B cell (primary cell): ENCODE measurements at regions of chr15 and their contacts with region 1.

Region 1: GRCh38 chr15:78195735-78196201 is 38.6 kb downstream of the ACSBG1 start:
- DNase-seq: peak; percentile 79
- ATAC-seq: peak; percentile 98
- H3K4me3 ChIP-seq: no peak overlapping the region
- H3K4me3 Mint-ChIP-seq: no peak overlapping the region
- H3K27ac ChIP-seq: no peak overlapping the region
- H3K27ac Mint-ChIP-seq: no peak overlapping the region
- H3K4me1 ChIP-seq: no peaks in the 10 kb centered on the region
- H3K4me1 Mint-ChIP-seq: peaks cover 2% of the 10 kb centered on the region
- H3K27me3 ChIP-seq: no peaks in the 10 kb centered on the region
- H3K27me3 Mint-ChIP-seq: no peaks in the 10 kb centered on the region
- CTCF ChIP-seq: peak; percentile 79

Region 2: GRCh38 chr15:77959432-77959879 is 236.3 kb before region 1 on chr15:
- CTCF ChIA-PET with region 1: interaction called, 23 read pairs
- POLR2A ChIA-PET with region 1: no interaction called
- intact Hi-C with region 1: loop called (anchors 2 kb)
- DNase-seq: peak; percentile 77
- ATAC-seq: peak; percentile 100
- H3K4me3 ChIP-seq: peak overlapping the region in 2 of 5 experiments; percentile 23 to 36
- H3K4me3 Mint-ChIP-seq: peak overlapping the region; percentile 49
- H3K27ac ChIP-seq: no peak overlapping the region
- H3K27ac Mint-ChIP-seq: no peak overlapping the region
- H3K4me1 ChIP-seq: peaks cover 3 to 6% of the 10 kb centered on the region in 2 donors
- H3K4me1 Mint-ChIP-seq: peaks cover 7% of the 10 kb centered on the region
- H3K27me3 ChIP-seq: peaks cover 0 to 2% (median 0%) of the 10 kb centered on the region in 4 experiments
- H3K27me3 Mint-ChIP-seq: peaks cover 18% of the 10 kb centered on the region
- CTCF ChIP-seq: peak; percentile 96

Region 3: GRCh38 chr15:78120523-78120922 is 75.2 kb before region 1 on chr15:
- CTCF ChIA-PET with region 1: interaction called, 394 read pairs
- POLR2A ChIA-PET with region 1: no interaction called
- intact Hi-C with region 1: no loop called
- DNase-seq: no peak
- ATAC-seq: no peak
- H3K4me3 ChIP-seq: no peak overlapping the region
- H3K4me3 Mint-ChIP-seq: no peak overlapping the region
- H3K27ac ChIP-seq: no peak overlapping the region
- H3K27ac Mint-ChIP-seq: no peak overlapping the region
- H3K4me1 ChIP-seq: no peaks in the 10 kb centered on the region
- H3K4me1 Mint-ChIP-seq: no peaks in the 10 kb centered on the region
- H3K27me3 ChIP-seq: no peaks in the 10 kb centered on the region
- H3K27me3 Mint-ChIP-seq: no peaks in the 10 kb centered on the region
- CTCF ChIP-seq: no peak

Region 4: DNA sequence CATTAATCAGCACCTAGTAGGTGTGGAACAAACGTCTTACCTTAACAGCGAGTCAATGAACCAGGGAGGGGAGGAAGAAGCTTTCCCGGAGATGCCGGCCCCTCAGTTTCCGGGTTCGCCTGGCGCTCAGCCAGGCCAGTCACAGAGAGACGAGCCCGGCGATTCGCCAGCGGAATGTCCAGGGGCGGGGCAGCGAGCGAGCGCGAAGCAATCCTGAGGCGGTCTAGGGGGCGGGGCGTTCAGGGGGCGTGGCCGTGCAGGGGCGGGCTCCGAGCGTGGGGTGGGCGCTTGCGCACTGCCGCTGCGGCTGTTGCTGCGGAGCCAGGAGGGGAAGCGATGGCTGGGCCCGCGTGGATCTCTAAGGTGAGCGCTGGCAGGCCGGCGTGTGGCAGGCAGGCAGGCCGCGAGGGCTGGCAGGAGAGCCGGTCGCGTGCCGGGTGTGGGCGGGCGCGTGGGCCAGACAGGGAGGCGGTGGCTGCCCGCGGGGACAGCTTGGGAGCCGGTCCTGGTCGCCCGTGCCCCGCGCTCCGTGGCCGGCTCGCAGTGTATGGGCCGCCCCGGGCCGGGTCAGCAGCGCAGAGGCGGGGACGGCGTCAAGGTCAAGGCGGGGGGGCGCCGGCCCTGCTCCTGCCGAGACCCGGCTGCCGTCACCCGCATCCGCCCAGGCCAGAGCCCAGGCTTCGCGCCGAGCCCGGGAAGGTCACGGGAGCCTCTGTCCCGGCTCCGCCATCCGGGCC is 46.5 kb before region 1 on chr15 and contains the start of gene IDH3A:
- CTCF ChIA-PET with region 1: interaction called, 38 read pairs
- POLR2A ChIA-PET with region 1: interaction called, 3 read pairs
- intact Hi-C with region 1: loop called (anchors 1 kb)
- DNase-seq: peak; percentile 99
- ATAC-seq: peak; percentile 97
- H3K4me3 ChIP-seq: peak within 1 kb of the TSS; percentile 63 to 93 (median 81)
- H3K4me3 Mint-ChIP-seq: peak within 1 kb of the TSS; percentile 98
- H3K27ac ChIP-seq: peak within 1 kb of the TSS; percentile 32 to 81
- H3K27ac Mint-ChIP-seq: peak within 1 kb of the TSS; percentile 93
- H3K4me1 ChIP-seq: peaks cover 20 to 25% of the 10 kb centered on the region in 2 donors
- H3K4me1 Mint-ChIP-seq: peaks cover 41% of the 10 kb centered on the region
- H3K27me3 ChIP-seq: no peaks in the 10 kb centered on the region
- H3K27me3 Mint-ChIP-seq: no peaks in the 10 kb centered on the region
- CTCF ChIP-seq: no peak
- total RNA-seq, gene IDH3A: 64.5 and 71.7 TPM in 2 replicates

Region 5: DNA sequence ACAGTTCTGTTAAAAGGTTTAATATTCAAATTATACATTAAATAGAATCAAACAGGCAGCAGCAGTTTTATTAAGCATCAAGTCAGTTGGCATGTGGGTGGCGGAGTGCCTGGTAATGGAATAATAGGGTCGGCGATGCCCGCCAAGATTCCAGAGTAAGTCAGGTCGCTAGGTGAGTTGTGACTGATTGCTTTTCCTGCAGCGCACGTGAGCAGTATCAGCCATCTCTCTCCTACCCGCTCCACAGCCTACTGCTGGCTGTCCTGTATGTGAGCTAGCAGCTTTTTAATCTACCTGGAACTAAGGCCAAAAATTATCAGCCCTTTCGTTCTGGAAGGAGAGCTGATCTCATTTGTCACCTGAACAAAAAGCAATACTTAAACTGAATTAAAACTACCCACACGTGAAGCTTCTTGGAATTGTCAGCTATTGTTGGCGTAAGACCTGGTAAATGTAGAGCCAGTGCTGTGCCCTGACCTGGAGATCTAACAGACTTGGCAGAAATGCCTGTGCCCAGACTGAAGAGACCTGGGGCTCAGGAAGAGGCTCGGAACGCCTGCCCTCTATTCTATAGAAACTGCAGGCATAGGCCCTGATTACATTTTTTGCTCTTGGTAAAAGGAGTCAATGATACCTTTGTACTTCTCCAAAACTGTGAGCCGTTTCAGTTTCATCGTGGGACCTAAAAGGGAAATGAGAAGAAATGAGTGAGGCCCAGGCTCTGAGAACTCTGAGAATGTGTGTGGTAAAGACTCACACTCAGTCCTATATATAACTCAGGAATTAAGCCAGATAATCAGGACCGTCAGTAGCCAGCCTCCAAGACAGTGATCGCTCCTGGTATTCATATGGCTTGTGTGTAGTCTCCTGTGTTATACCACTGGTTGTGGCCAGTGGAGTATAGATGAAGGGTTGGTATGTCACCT is 24.7 kb before region 1 on chr15:
- CTCF ChIA-PET with region 1: interaction called, 83 read pairs
- POLR2A ChIA-PET with region 1: interaction called, 3 read pairs
- intact Hi-C with region 1: no loop called
- DNase-seq: peak; percentile 82
- ATAC-seq: peak; percentile 72
- H3K4me3 ChIP-seq: peak overlapping the region in 1 of 5 experiments; percentile 30
- H3K4me3 Mint-ChIP-seq: peak overlapping the region; percentile 81
- H3K27ac ChIP-seq: peak overlapping the region; percentile 50 to 70
- H3K27ac Mint-ChIP-seq: peak overlapping the region; percentile 95
- H3K4me1 ChIP-seq: peaks cover 83 to 84% of the 10 kb centered on the region in 2 donors
- H3K4me1 Mint-ChIP-seq: peaks cover 87% of the 10 kb centered on the region
- H3K27me3 ChIP-seq: no peaks in the 10 kb centered on the region
- H3K27me3 Mint-ChIP-seq: no peaks in the 10 kb centered on the region
- CTCF ChIP-seq: no peak

Region 6: GRCh38 chr15:78182821-78183220 is 12.9 kb before region 1 on chr15:
- CTCF ChIA-PET with region 1: interaction called, 83 read pairs
- POLR2A ChIA-PET with region 1: no interaction called
- intact Hi-C with region 1: no loop called
- DNase-seq: no peak
- ATAC-seq: no peak
- H3K4me3 ChIP-seq: no peak overlapping the region
- H3K4me3 Mint-ChIP-seq: no peak overlapping the region
- H3K27ac ChIP-seq: no peak overlapping the region
- H3K27ac Mint-ChIP-seq: no peak overlapping the region
- H3K4me1 ChIP-seq: no peaks in the 10 kb centered on the region
- H3K4me1 Mint-ChIP-seq: peaks cover 3% of the 10 kb centered on the region
- H3K27me3 ChIP-seq: no peaks in the 10 kb centered on the region
- H3K27me3 Mint-ChIP-seq: peaks cover 9% of the 10 kb centered on the region
- CTCF ChIP-seq: no peak

Region 7: DNA sequence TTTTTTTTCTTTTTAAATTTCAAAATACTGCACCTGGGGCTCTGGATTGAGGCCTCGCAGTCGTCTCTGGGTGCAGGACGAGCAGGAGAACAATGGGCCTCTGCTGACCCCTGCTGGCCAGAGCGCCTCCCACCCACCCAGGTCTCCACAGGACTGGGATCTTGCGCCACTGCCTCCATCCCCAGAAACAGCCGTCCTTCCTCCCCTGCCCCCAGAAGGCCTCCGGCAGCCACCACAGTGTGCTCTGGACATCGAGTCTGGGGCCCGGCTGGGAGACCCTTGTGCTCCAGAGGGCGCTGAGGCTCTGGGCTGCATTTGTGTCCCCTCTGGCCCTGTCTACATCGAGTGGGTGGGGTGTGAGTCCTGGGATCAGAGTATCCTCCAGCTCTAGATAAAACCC is 45.2 kb after region 1 on chr15:
- CTCF ChIA-PET with region 1: interaction called, 78 read pairs
- POLR2A ChIA-PET with region 1: no interaction called
- intact Hi-C with region 1: loop called (anchors 1 kb)
- DNase-seq: peak; percentile 79
- ATAC-seq: peak; percentile 92
- H3K4me3 ChIP-seq: no peak overlapping the region
- H3K4me3 Mint-ChIP-seq: no peak overlapping the region
- H3K27ac ChIP-seq: no peak overlapping the region
- H3K27ac Mint-ChIP-seq: no peak overlapping the region
- H3K4me1 ChIP-seq: no peaks in the 10 kb centered on the region
- H3K4me1 Mint-ChIP-seq: no peaks in the 10 kb centered on the region
- H3K27me3 ChIP-seq: peaks cover 0 to 7% (median 0%) of the 10 kb centered on the region in 4 experiments
- H3K27me3 Mint-ChIP-seq: peaks cover 6% of the 10 kb centered on the region
- CTCF ChIP-seq: peak; percentile 87